BJ (cell line): ENCODE measurements at regions of chr14 and their contacts with region 1.

Region 1: GRCh38 chr14:53306267-53306721 is 153.2 kb upstream of the DDHD1 start:
- DNase-seq: no peak
- H3K4me3 ChIP-seq: peak overlapping the region; percentile 38
- H3K27me3 ChIP-seq: peaks cover 3% of the 10 kb centered on the region
- CTCF ChIP-seq: peak; percentile 79

Region 2: DNA sequence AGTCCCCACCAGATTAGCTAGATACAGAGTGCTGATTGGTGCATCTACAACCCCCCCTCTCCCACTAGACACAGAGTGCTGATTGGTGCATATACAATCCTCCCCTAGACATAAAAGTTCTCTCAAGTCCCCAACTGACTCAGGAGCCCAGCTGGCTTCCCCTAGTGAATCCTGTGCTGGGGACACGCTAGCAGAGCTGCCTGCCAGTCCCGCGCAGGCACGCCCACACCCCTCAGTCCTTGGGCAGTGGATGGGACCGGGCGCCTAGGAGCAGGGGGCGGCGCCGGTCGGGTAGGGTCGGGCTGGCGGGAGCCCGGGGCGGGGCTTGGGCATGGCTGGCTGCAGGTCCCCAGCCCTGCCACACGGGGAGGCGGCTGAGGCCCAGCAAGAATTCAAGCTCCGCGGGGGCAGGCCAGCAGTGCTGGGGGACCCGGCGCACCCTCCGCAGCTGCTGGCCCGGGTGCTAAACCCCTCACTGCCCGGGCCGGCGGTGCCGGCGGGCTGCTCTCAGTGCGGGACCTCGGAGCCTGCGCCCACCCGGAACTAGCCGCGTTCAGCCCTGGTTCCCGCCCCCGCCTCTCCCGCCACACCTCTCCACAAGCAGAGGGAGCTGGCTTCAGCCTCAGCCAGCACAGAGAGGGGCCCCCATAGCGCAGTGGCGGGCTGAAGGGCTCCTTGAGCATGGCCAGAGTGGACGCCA is 88.8 kb before region 1 on chr14:
- CTCF ChIA-PET with region 1: no interaction called
- POLR2A ChIA-PET with region 1: no interaction called
- DNase-seq: peak; percentile 2
- H3K4me3 ChIP-seq: peak overlapping the region; percentile 45
- H3K27me3 ChIP-seq: peaks cover 2% of the 10 kb centered on the region; the same call in 1 of the 2 replicates
- CTCF ChIP-seq: peak; percentile 37; the same call in 1 of the 2 replicates

Region 3: GRCh38 chr14:53316499-53316898 is 10.2 kb after region 1 on chr14:
- CTCF ChIA-PET with region 1: interaction called, 24 read pairs
- POLR2A ChIA-PET with region 1: no interaction called
- DNase-seq: no peak
- H3K4me3 ChIP-seq: no peak overlapping the region
- H3K27me3 ChIP-seq: no peaks in the 10 kb centered on the region
- CTCF ChIP-seq: no peak

Region 4: GRCh38 chr14:53325176-53325806 is 19.0 kb after region 1 on chr14:
- CTCF ChIA-PET with region 1: interaction called, 19 read pairs
- POLR2A ChIA-PET with region 1: no interaction called
- DNase-seq: no peak
- H3K4me3 ChIP-seq: no peak overlapping the region
- H3K27me3 ChIP-seq: no peaks in the 10 kb centered on the region
- CTCF ChIP-seq: 0 out of 2 replicates have a peak, but pooled peaks have one; percentile 25